CD14-positive monocyte (primary cell): ENCODE measurements at regions of chr12 and their contacts with region 1.

Region 1: GRCh38 chr12:121060149-121061001 is 21.3 kb upstream of the OASL start:
- DNase-seq: peak; percentile 73 to 78 (median 77)
- H3K4me3 ChIP-seq: peak overlapping the region; percentile 38 to 88 (median 39)
- H3K4me3 Mint-ChIP-seq: peak overlapping the region; percentile 76 to 94
- H3K27ac ChIP-seq: peak overlapping the region; percentile 55 to 95
- H3K27ac Mint-ChIP-seq: peak overlapping the region; percentile 83 to 96 (median 94)
- H3K4me1 ChIP-seq: peaks cover 8 to 16% of the 10 kb centered on the region in 2 donors
- H3K4me1 Mint-ChIP-seq: peaks cover 8% of the 10 kb centered on the region
- H3K27me3 ChIP-seq: no peaks in the 10 kb centered on the region
- H3K27me3 Mint-ChIP-seq: peaks cover 2 to 4% (median 2%) of the 10 kb centered on the region in 3 donors
- CTCF ChIP-seq: peak; percentile 72

Region 2: GRCh38 chr12:121005346-121005815 is 55.0 kb before region 1 on chr12:
- intact Hi-C with region 1: loop called in 1 of 2 experiments (anchors 5 kb)
- DNase-seq: peak; percentile 25 to 56 (median 40)
- H3K4me3 ChIP-seq: no peak overlapping the region
- H3K4me3 Mint-ChIP-seq: no peak overlapping the region
- H3K27ac ChIP-seq: no peak overlapping the region
- H3K27ac Mint-ChIP-seq: peak overlapping the region in 5 of 7 donors; percentile 26 to 71 (median 43)
- H3K4me1 ChIP-seq: no peaks in the 10 kb centered on the region
- H3K4me1 Mint-ChIP-seq: no peaks in the 10 kb centered on the region
- H3K27me3 ChIP-seq: no peaks in the 10 kb centered on the region
- H3K27me3 Mint-ChIP-seq: peaks cover 0 to 4% (median 2%) of the 10 kb centered on the region in 3 donors
- CTCF ChIP-seq: peak; percentile 81

Region 3: DNA sequence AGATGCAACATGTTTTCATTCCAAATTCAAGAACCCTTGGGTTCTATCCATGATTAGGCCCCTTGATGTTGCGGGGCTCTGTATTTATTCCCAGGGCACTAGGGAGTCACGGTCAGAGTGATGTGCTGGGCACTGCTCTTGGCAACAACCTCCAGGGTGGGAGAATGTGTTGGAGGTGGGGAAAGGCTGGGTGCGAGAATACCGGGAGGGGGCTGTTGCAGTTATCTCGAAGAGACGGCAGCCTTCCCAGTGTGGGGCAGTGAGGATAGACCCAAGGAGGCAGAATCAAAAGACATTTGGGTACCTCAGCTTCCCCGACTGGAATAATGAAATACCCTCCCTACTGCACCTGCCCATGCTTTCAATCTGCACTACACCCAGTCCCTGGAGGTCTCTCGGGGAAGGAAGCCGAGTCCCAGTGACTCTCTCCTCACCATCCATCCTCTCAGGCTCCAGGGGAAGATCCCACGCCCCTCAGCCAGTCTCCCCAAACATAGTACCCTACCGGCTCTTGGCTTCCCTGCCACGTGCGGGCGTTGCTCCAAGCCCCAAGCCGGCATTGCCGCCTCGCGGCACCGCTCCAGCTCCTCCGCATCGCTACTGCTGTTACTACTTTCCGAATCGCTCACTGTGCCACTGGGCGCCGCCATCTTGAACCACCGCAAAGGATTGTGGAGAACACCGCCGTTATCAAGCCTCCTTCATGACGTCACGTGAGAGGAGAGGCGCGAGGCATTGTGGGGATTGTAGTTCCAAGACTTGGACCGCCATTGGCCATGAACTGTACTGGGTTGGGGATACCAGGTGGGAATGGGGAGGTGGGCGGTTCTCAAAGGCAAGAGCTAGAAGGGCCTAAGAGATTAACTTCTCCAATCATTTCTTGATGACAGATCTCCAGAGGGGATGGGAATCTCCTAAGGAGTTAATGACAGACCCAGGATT is 44.3 kb before region 1 on chr12 and contains the start of gene C12orf43:
- intact Hi-C with region 1: loop called in 1 of 2 experiments (anchors 5 kb)
- DNase-seq: peak; percentile 83 to 91 (median 90)
- H3K4me3 ChIP-seq: peak within 1 kb of the TSS; percentile 84 to 91 (median 89)
- H3K4me3 Mint-ChIP-seq: peak within 1 kb of the TSS; percentile 97 to 99
- H3K27ac ChIP-seq: peak within 1 kb of the TSS; percentile 73 to 83
- H3K27ac Mint-ChIP-seq: peak within 1 kb of the TSS; percentile 93 to 97 (median 96)
- H3K4me1 ChIP-seq: peaks cover 7 to 8% of the 10 kb centered on the region in 2 donors
- H3K4me1 Mint-ChIP-seq: peaks cover 13% of the 10 kb centered on the region
- H3K27me3 ChIP-seq: no peaks in the 10 kb centered on the region
- H3K27me3 Mint-ChIP-seq: peaks cover 0 to 2% (median 0%) of the 10 kb centered on the region in 3 donors
- CTCF ChIP-seq: no peak
- polyA plus RNA-seq, gene C12orf43: 7.2 to 10.9 (median 9.6) TPM

Region 4: DNA sequence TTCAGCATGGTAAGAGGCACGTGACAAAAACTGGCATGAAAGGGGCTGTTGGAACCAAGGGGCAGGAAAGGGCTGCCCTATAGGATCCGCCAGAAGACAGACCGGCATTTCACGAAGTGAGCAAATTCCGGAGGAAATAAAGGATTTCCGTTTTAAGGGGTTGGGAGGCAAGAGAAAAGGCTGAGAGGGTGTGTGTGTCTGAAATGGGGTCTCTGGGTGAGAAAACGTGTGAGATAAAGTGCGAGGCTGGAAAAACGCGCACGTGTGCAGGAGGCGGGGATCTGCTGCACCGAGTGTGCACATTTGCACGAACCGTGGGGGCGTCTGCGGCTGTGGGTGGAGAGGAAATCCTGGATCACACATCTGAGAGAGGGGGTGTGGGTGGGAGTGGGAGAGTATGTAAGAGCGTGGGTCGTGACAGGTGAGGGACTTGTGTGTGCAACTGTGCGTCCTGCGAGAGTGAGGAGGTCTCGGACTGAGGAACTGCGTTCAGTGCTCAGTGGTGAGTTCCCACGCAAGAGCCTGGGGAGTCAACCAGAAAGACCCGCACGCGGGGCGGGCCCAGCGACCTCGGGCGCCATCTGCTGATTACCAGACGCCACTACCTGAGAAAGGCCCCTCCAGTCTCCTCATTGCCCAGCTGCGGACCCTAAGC is 35.3 kb after region 1 on chr12:
- intact Hi-C with region 1: loop called (anchors 5 kb)
- DNase-seq: peak; percentile 59 to 77 (median 76)
- H3K4me3 ChIP-seq: peak overlapping the region; percentile 38 to 73 (median 40)
- H3K4me3 Mint-ChIP-seq: peak overlapping the region; percentile 81 to 95
- H3K27ac ChIP-seq: no peak overlapping the region
- H3K27ac Mint-ChIP-seq: peak overlapping the region in 5 of 7 donors; percentile 4 to 90 (median 46)
- H3K4me1 ChIP-seq: peaks cover 21 to 23% of the 10 kb centered on the region in 2 donors
- H3K4me1 Mint-ChIP-seq: peaks cover 26% of the 10 kb centered on the region
- H3K27me3 ChIP-seq: no peaks in the 10 kb centered on the region
- H3K27me3 Mint-ChIP-seq: peaks cover 7 to 11% (median 7%) of the 10 kb centered on the region in 3 donors
- CTCF ChIP-seq: peak; percentile 86

Region 5: DNA sequence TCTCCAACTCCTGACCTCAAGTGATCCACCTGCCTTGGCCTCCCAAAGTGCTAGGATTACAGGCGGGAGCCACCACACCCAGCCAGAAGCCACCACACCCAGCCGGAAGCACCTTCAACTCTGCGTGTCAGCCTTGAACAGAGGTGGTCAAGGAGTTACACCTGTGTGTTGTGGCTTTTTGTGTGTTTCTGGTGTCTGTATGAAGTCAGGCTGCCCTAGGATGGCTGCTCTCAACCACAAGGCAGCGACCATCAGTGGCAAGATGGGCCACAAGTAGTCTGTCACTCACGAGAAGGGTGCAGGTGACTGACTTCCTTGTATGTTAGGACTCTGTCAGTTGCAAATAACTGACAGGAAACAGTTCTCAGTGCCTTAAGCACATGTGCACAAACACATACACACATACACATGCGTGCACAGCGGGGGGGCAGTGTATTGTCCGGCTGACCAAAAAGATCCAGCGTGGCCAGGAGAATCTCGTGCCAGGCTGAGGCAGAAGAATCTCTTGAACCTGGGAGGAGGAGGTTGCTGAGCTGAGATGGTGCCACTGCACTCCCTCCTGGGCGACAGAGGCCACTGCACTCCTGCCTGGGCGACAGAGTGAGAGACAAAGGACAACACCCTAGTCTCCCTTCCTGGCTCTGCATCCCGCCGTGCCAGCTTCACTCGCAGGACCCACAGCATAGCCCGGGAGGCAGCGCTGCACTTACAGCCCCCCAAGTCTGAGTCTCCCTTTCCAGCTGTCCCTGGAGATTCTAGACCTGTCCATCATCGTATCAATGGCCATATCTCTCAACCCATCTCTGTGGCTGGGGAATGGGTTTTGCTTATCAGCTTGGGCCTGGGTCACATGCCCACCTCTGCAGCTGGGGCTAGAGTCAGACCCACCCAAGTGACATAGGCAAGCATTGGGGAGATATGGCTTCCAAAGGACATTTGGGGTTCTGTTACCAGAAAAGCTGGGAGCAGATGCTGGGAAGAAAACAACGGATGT is 163.2 kb after region 1 on chr12:
- intact Hi-C with region 1: loop called in 1 of 2 experiments (anchors 5 kb)
- DNase-seq: peak in 2 of 3 donors; percentile 34 to 51
- H3K4me3 ChIP-seq: no peak overlapping the region
- H3K4me3 Mint-ChIP-seq: no peak overlapping the region
- H3K27ac ChIP-seq: peak overlapping the region; percentile 1 to 31
- H3K27ac Mint-ChIP-seq: peak overlapping the region in 4 of 7 donors; percentile 33 to 79 (median 68)
- H3K4me1 ChIP-seq: peaks cover 13 to 17% of the 10 kb centered on the region in 2 donors
- H3K4me1 Mint-ChIP-seq: peaks cover 22% of the 10 kb centered on the region
- H3K27me3 ChIP-seq: no peaks in the 10 kb centered on the region
- H3K27me3 Mint-ChIP-seq: peaks cover 0 to 4% (median 3%) of the 10 kb centered on the region in 3 donors
- CTCF ChIP-seq: peak; percentile 62